B cell (primary cell): ENCODE measurements at regions of chr20 and their contacts with region 1.

Region 1: DNA sequence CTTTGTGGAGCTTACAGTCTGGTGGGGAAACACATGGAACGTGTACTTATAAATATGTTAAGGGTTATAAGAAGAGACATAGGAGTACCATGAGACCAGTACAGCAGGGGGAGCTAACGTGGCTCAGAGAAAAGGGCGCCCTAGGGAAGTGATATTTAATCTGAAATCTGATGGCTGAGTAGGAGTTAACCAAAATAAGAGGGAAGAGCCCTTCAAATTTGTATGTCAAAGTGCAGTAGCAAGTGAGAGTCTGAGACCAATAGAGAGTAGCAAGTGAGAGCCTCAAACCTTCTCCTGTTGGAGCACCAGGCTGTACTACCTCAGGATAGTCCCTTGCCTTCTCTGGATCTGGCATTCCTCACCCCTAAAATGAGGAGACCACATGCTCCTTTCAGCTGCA is 6.1 kb upstream of the PKIG start:
- DNase-seq: peak; percentile 84
- ATAC-seq: peak; percentile 73
- H3K4me3 ChIP-seq: peak overlapping the region in 2 of 5 experiments; percentile 10 to 17
- H3K4me3 Mint-ChIP-seq: peak overlapping the region; percentile 48
- H3K27ac ChIP-seq: peak overlapping the region; percentile 17 to 24
- H3K27ac Mint-ChIP-seq: peak overlapping the region; percentile 66
- H3K4me1 ChIP-seq: peaks cover 36 to 39% of the 10 kb centered on the region in 2 donors
- H3K4me1 Mint-ChIP-seq: peaks cover 42% of the 10 kb centered on the region
- H3K27me3 ChIP-seq: no peaks in the 10 kb centered on the region
- H3K27me3 Mint-ChIP-seq: no peaks in the 10 kb centered on the region
- CTCF ChIP-seq: peak; percentile 73

Region 2: DNA sequence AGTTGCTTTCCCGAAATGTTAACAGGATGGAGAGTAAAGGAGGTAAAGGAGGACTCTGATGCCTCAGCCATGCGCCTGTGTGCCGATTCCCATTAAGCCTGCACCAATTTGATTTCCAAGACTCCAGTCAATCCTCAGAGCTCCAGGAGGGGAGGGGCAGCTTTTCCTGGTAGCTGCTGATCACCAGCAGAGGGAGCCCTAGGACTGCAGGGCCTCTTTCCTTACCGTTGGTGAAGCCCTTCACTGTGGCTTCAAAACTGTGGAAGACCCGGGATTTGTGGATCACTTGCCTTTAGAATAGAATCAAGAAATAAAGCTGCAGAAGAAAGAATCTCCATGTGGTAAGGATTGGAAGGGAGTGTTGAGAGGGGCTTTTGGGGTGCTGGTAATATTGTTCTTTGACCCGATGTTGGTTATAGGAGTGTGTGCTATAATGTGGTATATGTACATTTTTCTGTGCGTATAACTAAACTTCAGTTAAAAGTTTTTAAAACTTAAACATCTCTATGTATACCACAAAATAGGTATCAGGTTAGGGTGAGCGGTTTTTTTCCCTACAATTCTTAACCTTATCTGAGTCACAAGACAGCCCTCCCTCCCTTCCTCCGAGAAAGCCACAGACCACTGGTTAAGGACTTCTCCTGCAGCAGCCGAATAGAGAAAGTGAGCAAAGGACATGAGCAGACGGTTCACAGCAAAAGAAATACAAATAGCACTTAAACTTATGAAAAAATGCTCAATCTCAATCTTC is 358.8 kb before region 1 on chr20:
- CTCF ChIA-PET with region 1: interaction called, 10 read pairs
- POLR2A ChIA-PET with region 1: no interaction called
- intact Hi-C with region 1: loop called (anchors 10 kb)
- DNase-seq: peak; percentile 72
- ATAC-seq: peak; percentile 57
- H3K4me3 ChIP-seq: no peak overlapping the region
- H3K4me3 Mint-ChIP-seq: peak overlapping the region; percentile 40
- H3K27ac ChIP-seq: no peak overlapping the region
- H3K27ac Mint-ChIP-seq: no peak overlapping the region
- H3K4me1 ChIP-seq: peaks cover 18 to 22% of the 10 kb centered on the region in 2 donors
- H3K4me1 Mint-ChIP-seq: peaks cover 34% of the 10 kb centered on the region
- H3K27me3 ChIP-seq: no peaks in the 10 kb centered on the region
- H3K27me3 Mint-ChIP-seq: no peaks in the 10 kb centered on the region
- CTCF ChIP-seq: peak; percentile 94

Region 3: DNA sequence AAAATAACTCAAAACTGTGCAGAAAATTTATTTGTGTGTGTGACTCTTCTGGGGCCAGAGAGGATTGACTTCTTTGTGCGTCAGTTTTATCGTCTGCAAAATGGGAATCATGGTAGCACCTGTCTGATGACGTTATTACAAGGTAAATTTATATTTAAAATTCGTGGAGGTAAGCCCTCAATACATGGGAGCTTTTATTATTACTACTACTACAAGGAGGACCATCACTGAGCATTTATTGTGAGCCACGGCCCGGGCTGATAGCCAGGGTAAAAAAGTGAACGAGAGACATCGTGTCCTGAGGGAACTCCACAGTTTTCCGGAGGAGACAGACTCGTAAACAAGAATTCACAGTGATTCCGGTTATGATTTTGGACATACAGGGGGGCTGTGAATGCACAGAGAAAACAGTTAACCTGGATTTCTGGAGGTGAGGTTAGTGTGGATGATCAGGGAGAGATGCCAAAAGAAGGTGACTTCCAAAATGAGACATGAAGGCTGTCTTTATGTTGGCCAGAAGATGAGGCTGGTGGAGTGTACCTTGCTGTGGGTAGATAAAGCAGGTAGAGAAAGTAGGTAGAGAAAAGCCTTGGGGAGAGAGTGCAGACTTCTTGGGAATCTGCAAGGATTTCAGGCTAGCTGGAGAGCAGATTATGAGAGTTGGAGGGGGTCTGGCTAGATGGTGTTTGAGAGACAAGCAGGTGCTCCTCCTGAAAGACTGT is 43.9 kb before region 1 on chr20:
- CTCF ChIA-PET with region 1: interaction called, 3 read pairs
- POLR2A ChIA-PET with region 1: interaction called, 4 read pairs
- intact Hi-C with region 1: loop called (anchors 5 kb)
- DNase-seq: peak; percentile 16
- ATAC-seq: no peak
- H3K4me3 ChIP-seq: peak overlapping the region; percentile 30 to 86 (median 64)
- H3K4me3 Mint-ChIP-seq: no peak overlapping the region
- H3K27ac ChIP-seq: peak overlapping the region in 1 of 2 donors; percentile 51
- H3K27ac Mint-ChIP-seq: no peak overlapping the region
- H3K4me1 ChIP-seq: peaks cover 11 to 16% of the 10 kb centered on the region in 2 donors
- H3K4me1 Mint-ChIP-seq: peaks cover 6% of the 10 kb centered on the region
- H3K27me3 ChIP-seq: no peaks in the 10 kb centered on the region
- H3K27me3 Mint-ChIP-seq: no peaks in the 10 kb centered on the region
- CTCF ChIP-seq: no peak

Region 4: GRCh38 chr20:44598423-44599305 is 22.4 kb after region 1 on chr20:
- CTCF ChIA-PET with region 1: interaction called, 772 read pairs
- POLR2A ChIA-PET with region 1: interaction called, 9 read pairs
- intact Hi-C with region 1: no loop called
- DNase-seq: peak; percentile 42
- ATAC-seq: peak; percentile 32
- H3K4me3 ChIP-seq: peak overlapping the region; percentile 14 to 45 (median 27)
- H3K4me3 Mint-ChIP-seq: peak overlapping the region; percentile 75
- H3K27ac ChIP-seq: peak overlapping the region; percentile 60 to 88
- H3K27ac Mint-ChIP-seq: peak overlapping the region; percentile 97
- H3K4me1 ChIP-seq: peaks cover 94 to 100% of the 10 kb centered on the region in 2 donors
- H3K4me1 Mint-ChIP-seq: peaks cover 82% of the 10 kb centered on the region
- H3K27me3 ChIP-seq: no peaks in the 10 kb centered on the region
- H3K27me3 Mint-ChIP-seq: no peaks in the 10 kb centered on the region
- CTCF ChIP-seq: peak; percentile 27

Region 5: GRCh38 chr20:44618318-44618731 is 42.0 kb after region 1 on chr20:
- CTCF ChIA-PET with region 1: interaction called, 17 read pairs
- POLR2A ChIA-PET with region 1: interaction called, 3 read pairs
- intact Hi-C with region 1: no loop called
- DNase-seq: no peak
- ATAC-seq: no peak
- H3K4me3 ChIP-seq: no peak overlapping the region
- H3K4me3 Mint-ChIP-seq: no peak overlapping the region
- H3K27ac ChIP-seq: peak overlapping the region; percentile 29 to 74
- H3K27ac Mint-ChIP-seq: peak overlapping the region; percentile 89
- H3K4me1 ChIP-seq: peaks cover 10 to 33% of the 10 kb centered on the region in 2 donors
- H3K4me1 Mint-ChIP-seq: peaks cover 49% of the 10 kb centered on the region
- H3K27me3 ChIP-seq: no peaks in the 10 kb centered on the region
- H3K27me3 Mint-ChIP-seq: no peaks in the 10 kb centered on the region
- CTCF ChIP-seq: no peak

Region 6: DNA sequence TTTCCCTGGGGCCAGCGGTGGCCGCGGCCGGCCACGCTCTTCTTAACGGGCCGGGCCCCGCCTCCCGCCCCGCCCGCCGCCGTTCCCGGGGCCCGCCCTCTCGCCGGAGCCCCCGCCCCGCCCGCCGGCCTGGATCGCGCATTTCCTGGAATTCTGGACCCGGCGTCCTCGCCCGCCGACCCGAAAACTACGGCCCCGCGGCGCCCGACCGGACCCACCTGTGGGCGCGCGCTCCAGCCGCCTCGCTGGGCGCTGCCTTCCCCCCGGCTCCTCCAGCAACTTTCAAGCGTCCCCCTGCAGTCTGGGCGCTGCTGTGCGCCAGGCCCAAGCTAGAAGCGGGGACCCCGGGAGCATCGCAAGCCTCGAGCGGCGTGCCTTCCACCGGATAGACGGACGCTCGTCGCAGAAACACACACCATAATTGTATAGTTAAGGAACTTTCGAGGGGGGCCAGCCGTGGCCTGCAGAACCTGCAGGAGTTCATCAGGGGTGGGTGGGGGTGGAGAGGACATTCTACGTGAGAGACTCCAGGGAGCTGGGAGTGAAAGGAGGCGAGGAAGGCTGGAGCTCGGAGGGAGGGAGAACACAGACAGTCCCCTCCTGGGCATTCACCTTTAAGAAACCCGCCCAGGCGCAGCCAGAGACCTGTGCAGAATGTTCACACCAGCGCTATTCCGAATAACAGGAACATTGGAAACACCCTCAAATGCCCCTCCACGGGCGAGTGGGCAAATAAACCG is 75.6 kb after region 1 on chr20 and contains the start of gene ADA:
- CTCF ChIA-PET with region 1: interaction called, 17 read pairs
- POLR2A ChIA-PET with region 1: no interaction called
- intact Hi-C with region 1: no loop called
- DNase-seq: peak; percentile 65
- ATAC-seq: peak; percentile 52
- H3K4me3 ChIP-seq: peak within 1 kb of the TSS; percentile 67 to 89 (median 77)
- H3K4me3 Mint-ChIP-seq: peak within 1 kb of the TSS; percentile 88
- H3K27ac ChIP-seq: peak within 1 kb of the TSS in 1 of 2 donors; percentile 57
- H3K27ac Mint-ChIP-seq: peak within 1 kb of the TSS; percentile 84
- H3K4me1 ChIP-seq: peaks cover 26 to 36% of the 10 kb centered on the region in 2 donors
- H3K4me1 Mint-ChIP-seq: peaks cover 43% of the 10 kb centered on the region
- H3K27me3 ChIP-seq: no peaks in the 10 kb centered on the region
- H3K27me3 Mint-ChIP-seq: no peaks in the 10 kb centered on the region
- CTCF ChIP-seq: no peak
- total RNA-seq, gene ADA: 34.2 and 34.3 TPM in 2 replicates

Region 7: GRCh38 chr20:44733341-44734069 is 157.2 kb after region 1 on chr20:
- CTCF ChIA-PET with region 1: interaction called, 5 read pairs
- POLR2A ChIA-PET with region 1: no interaction called
- intact Hi-C with region 1: loop called (anchors 2 kb)
- DNase-seq: peak; percentile 61
- ATAC-seq: peak; percentile 78
- H3K4me3 ChIP-seq: no peak overlapping the region
- H3K4me3 Mint-ChIP-seq: no peak overlapping the region
- H3K27ac ChIP-seq: no peak overlapping the region
- H3K27ac Mint-ChIP-seq: no peak overlapping the region
- H3K4me1 ChIP-seq: no peaks in the 10 kb centered on the region
- H3K4me1 Mint-ChIP-seq: peaks cover 9% of the 10 kb centered on the region
- H3K27me3 ChIP-seq: no peaks in the 10 kb centered on the region
- H3K27me3 Mint-ChIP-seq: no peaks in the 10 kb centered on the region
- CTCF ChIP-seq: peak; percentile 73